IMR-90 (cell line): ENCODE measurements at regions of chr1 and their contacts with region 1.

Region 1: DNA sequence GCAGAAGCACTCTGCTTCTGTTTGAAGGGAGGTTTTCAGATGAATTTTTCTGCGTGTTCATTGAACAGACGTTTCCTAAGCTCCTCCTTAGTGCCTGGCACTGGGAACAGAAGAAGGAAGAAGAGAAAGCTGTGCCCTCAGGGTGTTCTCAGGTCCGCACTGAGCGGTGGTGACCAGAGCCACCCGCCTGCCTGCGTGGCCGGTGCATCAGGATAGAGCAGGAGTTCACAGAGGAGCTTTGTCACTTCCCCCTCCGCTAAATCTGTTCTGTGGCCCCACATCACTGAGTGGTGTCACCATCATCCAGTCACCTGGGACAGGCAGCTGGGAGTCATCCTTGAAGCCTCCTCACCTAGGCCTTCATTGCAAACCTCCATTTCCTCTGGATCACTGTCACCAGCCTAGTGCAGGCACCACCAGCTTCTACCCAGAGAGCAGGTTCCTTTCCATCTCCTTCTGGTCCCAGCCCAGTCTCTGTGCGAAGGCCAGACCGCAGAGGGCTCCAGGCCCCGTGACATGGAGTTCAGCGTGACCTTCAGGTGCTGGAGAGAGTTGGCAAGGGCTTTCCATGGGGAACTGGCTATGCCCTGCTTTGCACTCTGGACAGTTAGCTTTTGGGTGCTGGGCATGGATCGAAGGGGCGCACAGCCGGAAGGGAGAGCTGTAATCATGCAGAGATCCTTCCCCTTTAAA is 21.7 kb downstream of the PARK7 start:
- DNase-seq: no peak
- ATAC-seq: no peak
- H3K4me3 ChIP-seq: no peak overlapping the region
- H3K27ac ChIP-seq: no peak overlapping the region
- H3K4me1 ChIP-seq: peaks cover 2% of the 10 kb centered on the region; the same call in 1 of the 2 replicates
- H3K27me3 ChIP-seq: no peaks in the 10 kb centered on the region
- CTCF ChIP-seq: no peak
- POLR2A ChIP-seq: no peak
- RAD21 ChIP-seq: no peak

Region 2: GRCh38 chr1:7893529-7894180 is 89.6 kb before region 1 on chr1:
- CTCF ChIA-PET with region 1: no interaction called
- POLR2A ChIA-PET with region 1: no interaction called
- dilution Hi-C with region 1: no loop called
- in situ Hi-C with region 1: no loop called
- intact Hi-C with region 1: no loop called
- DNase-seq: peak; percentile 80
- ATAC-seq: peak; percentile 75
- H3K4me3 ChIP-seq: no peak overlapping the region
- H3K27ac ChIP-seq: no peak overlapping the region
- H3K4me1 ChIP-seq: peaks cover 2% of the 10 kb centered on the region
- H3K27me3 ChIP-seq: peaks cover 2% of the 10 kb centered on the region; the same call in 1 of the 2 replicates
- CTCF ChIP-seq: no peak
- POLR2A ChIP-seq: no peak
- RAD21 ChIP-seq: no peak

Region 3: DNA sequence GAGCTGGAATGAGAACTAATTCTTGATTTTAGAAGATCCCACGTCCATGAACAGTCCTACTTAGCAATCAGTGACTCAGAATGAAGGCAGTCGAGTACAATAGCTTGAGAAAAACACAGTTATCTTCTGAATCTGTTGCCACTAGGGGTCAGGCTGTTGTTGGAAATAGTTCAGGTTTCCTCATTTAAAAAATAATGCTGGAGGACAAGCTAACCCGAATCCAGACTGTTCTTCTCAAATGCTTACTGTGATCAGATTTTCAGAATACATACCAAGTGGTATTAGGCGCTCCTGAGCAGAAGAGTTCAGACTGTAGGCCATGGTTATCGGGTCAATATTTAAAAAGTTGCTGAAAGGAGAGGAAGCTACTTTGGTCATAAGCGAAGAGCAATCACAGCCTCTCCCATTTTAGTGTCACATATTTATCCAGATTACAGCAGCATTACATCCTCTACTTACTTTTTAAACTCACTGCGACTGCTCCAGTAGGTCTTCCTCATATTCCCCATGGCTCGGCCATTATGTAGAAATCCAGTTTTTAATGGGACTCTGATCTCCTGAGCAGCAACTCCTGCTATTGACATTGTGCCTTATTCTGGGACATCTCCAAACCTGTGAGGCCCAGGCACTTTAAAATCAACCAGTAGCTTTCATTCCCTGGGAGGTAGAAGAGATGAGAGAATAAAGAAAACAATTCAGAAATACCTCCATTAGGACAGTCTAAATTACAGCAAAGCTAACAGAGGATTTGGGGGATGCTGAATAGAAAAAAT is 32.0 kb after region 1 on chr1:
- CTCF ChIA-PET with region 1: interaction called, 6 read pairs
- POLR2A ChIA-PET with region 1: no interaction called
- dilution Hi-C with region 1: no loop called
- in situ Hi-C with region 1: loop called (anchors 5 kb)
- intact Hi-C with region 1: loop called (anchors 1 kb)
- DNase-seq: peak; percentile 89
- ATAC-seq: peak; percentile 73
- H3K4me3 ChIP-seq: no peak overlapping the region
- H3K27ac ChIP-seq: peak overlapping the region; percentile 58; the same call in 1 of the 2 replicates
- H3K4me1 ChIP-seq: peaks cover 20% of the 10 kb centered on the region
- H3K27me3 ChIP-seq: no peaks in the 10 kb centered on the region
- CTCF ChIP-seq: peak; percentile 70
- POLR2A ChIP-seq: peak; percentile 39
- RAD21 ChIP-seq: peak; percentile 64

Region 4: DNA sequence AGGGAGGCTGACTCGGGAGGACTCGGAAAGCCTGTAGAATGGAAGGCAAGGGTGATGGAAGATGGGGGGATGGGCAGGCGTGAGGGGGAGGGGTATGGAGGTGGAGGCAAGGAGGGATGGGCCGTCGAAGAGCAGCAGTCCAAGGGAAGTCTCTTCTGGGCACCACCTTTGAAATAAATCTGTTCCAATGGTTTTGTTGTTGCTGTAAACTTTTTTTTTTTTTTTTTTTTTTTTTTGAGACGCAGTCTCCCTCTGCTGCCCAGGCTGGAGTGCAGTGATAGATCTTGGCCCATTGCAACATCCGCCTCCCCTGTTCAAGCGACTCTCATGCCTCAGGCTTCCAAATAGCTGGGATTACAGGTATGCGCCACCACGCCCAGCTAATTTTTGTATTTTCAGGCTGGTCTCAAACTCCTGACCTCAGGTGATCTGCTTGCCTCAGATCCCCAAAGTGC is 255.6 kb after region 1 on chr1:
- CTCF ChIA-PET with region 1: no interaction called
- POLR2A ChIA-PET with region 1: no interaction called
- dilution Hi-C with region 1: no loop called
- in situ Hi-C with region 1: no loop called
- intact Hi-C with region 1: loop called (anchors 2 kb)
- DNase-seq: peak; percentile 58
- ATAC-seq: peak; percentile 19
- H3K4me3 ChIP-seq: no peak overlapping the region
- H3K27ac ChIP-seq: peak overlapping the region; percentile 76
- H3K4me1 ChIP-seq: peaks cover 14% of the 10 kb centered on the region
- H3K27me3 ChIP-seq: no peaks in the 10 kb centered on the region
- CTCF ChIP-seq: peak; percentile 46
- POLR2A ChIP-seq: no peak
- RAD21 ChIP-seq: peak; percentile 46

Region 5: GRCh38 chr1:8314346-8315280 is 331.4 kb after region 1 on chr1:
- CTCF ChIA-PET with region 1: interaction called, 6 read pairs
- POLR2A ChIA-PET with region 1: no interaction called
- dilution Hi-C with region 1: no loop called
- in situ Hi-C with region 1: loop called (anchors 5 kb)
- intact Hi-C with region 1: loop called (anchors 1 kb)
- DNase-seq: peak; percentile 77
- ATAC-seq: peak; percentile 86
- H3K4me3 ChIP-seq: no peak overlapping the region
- H3K27ac ChIP-seq: no peak overlapping the region; the same call in 1 of the 2 replicates
- H3K4me1 ChIP-seq: peaks cover 10% of the 10 kb centered on the region
- H3K27me3 ChIP-seq: no peaks in the 10 kb centered on the region
- CTCF ChIP-seq: peak; percentile 98
- POLR2A ChIP-seq: peak; percentile 70
- RAD21 ChIP-seq: peak; percentile 100

Region 6: GRCh38 chr1:8348777-8349491 is 365.7 kb after region 1 on chr1:
- CTCF ChIA-PET with region 1: interaction called, 3 read pairs
- POLR2A ChIA-PET with region 1: no interaction called
- dilution Hi-C with region 1: no loop called
- in situ Hi-C with region 1: loop called (anchors 5 kb)
- intact Hi-C with region 1: loop called (anchors 1 kb)
- DNase-seq: peak; percentile 58
- ATAC-seq: peak; percentile 70
- H3K4me3 ChIP-seq: no peak overlapping the region
- H3K27ac ChIP-seq: no peak overlapping the region
- H3K4me1 ChIP-seq: peaks cover 17% of the 10 kb centered on the region
- H3K27me3 ChIP-seq: no peaks in the 10 kb centered on the region
- CTCF ChIP-seq: peak; percentile 76
- POLR2A ChIP-seq: no peak
- RAD21 ChIP-seq: peak; percentile 89

Region 7: DNA sequence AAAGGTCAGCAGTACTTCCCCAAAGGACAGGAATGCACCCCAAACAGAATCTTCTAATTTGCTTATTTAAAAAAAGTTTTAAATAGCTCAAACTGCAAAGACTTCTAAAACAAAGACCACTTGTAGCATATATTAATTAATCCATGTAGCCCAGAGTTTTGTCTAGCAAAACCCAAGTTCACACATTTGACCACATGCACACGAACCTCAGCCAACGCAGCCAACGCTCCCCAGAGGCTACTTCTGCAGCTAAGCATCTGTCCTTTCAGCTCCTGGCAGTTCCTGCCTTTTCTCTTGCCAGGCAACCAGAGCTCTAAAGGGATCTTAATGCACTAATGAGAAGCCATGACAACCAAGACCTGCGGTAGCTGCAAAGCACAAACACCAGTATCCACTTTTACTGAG is 744.6 kb after region 1 on chr1:
- CTCF ChIA-PET with region 1: no interaction called
- POLR2A ChIA-PET with region 1: no interaction called
- dilution Hi-C with region 1: no loop called
- in situ Hi-C with region 1: loop called (anchors 25 kb)
- intact Hi-C with region 1: loop called (anchors 5 kb)
- DNase-seq: no peak
- ATAC-seq: no peak
- H3K4me3 ChIP-seq: no peak overlapping the region
- H3K27ac ChIP-seq: no peak overlapping the region
- H3K4me1 ChIP-seq: peaks cover 2% of the 10 kb centered on the region
- H3K27me3 ChIP-seq: no peaks in the 10 kb centered on the region
- CTCF ChIP-seq: no peak
- POLR2A ChIP-seq: no peak
- RAD21 ChIP-seq: no peak